ENCODE measurements at regions of chr5 and their contacts with region 1.

Region 1: DNA sequence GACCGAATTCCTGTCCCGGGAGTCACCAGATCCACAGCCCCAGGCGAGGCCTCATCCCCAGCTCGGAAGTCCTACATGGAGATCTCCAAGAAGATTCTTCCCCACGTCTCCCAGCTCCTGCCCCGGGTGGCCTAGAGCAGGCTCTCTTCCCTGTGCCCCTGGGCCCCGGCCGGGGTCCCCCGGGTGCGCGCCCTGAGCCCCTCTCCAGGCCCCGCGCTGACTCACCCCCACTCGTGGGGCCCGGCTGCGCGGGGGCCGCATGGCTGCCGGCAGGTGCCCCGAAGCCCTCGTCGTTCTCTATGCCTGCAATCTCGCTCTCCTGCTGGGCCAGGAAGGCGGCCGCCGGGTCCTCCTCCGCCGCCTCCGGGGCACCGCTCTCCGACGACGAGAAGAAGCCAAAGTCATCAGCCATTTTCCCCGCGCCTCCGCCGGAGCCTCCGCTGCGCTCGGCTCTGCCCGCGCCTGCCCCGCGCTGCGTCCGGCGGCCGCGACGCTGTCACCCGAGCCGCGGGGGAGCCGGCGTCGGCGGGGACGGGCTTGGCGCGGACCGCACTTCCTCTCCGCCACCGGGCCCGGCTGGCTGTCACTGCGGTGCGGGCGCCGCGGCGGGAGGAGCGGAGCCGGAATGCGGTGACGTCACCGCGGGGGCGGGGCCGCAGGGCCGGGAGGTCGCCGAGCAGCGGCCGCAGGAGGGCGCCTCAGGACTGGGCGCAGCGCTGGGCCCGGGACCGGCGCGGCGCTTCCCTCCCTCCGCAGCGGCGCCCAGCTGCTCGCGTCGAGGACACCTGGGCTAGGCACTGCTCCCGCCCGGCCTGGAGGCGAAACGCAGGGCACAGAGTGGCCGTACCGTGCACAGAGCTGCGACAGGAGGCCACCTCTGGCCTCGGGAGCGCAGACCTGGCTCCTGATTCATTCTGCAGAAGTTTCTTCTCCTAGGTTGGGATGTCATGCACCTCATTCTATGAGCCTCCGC is at the start of gene CLTB:
- DNase-seq: peak; percentile 72 to 98 (median 85)
- ATAC-seq: peak; percentile 90 to 91
- H3K4me3 Mint-ChIP-seq: peak within 1 kb of the TSS; percentile 77 to 88 (median 82)
- H3K27ac Mint-ChIP-seq: peak within 1 kb of the TSS; percentile 72 to 92 (median 88)
- H3K4me1 Mint-ChIP-seq: peaks cover 20 to 52% (median 46%) of the 10 kb centered on the region in 4 donors
- H3K27me3 Mint-ChIP-seq: no peaks in the 10 kb centered on the region
- polyA plus RNA-seq, gene CLTB: 69.2 to 82.7 (median 73.5) TPM

Region 2: GRCh38 chr5:176388444-176389134 is 27.6 kb before region 1 on chr5 and contains the starts of genes HIGD2A and NOP16:
- POLR2A ChIA-PET with region 1: interaction called, 25 read pairs
- DNase-seq: peak; percentile 96 to 100 (median 98)
- ATAC-seq: peak; percentile 89 to 90
- H3K4me3 Mint-ChIP-seq: peak within 1 kb of the TSS; percentile 86 to 100 (median 99)
- H3K27ac Mint-ChIP-seq: peak within 1 kb of the TSS; percentile 95 to 100 (median 100)
- H3K4me1 Mint-ChIP-seq: peaks cover 17 to 42% (median 37%) of the 10 kb centered on the region in 4 donors
- H3K27me3 Mint-ChIP-seq: no peaks in the 10 kb centered on the region
- polyA plus RNA-seq, gene HIGD2A: 209 to 280 (median 250) TPM
- polyA plus RNA-seq, gene NOP16: 19.1 to 40.5 (median 22.8) TPM

Region 3: GRCh38 chr5:176447982-176448608 is 31.9 kb after region 1 on chr5 and contains the start of gene FAF2:
- POLR2A ChIA-PET with region 1: interaction called, 22 read pairs
- DNase-seq: peak; percentile 95 to 100 (median 98)
- ATAC-seq: peak; percentile 96 to 97
- H3K4me3 Mint-ChIP-seq: peak within 1 kb of the TSS; percentile 90 to 100 (median 97)
- H3K27ac Mint-ChIP-seq: peak within 1 kb of the TSS; percentile 96 to 99 (median 98)
- H3K4me1 Mint-ChIP-seq: peaks cover 17 to 52% (median 44%) of the 10 kb centered on the region in 4 donors
- H3K27me3 Mint-ChIP-seq: peaks cover 0 to 3% (median 0%) of the 10 kb centered on the region in 5 donors
- polyA plus RNA-seq, gene FAF2: 9.5 to 12.0 (median 11.4) TPM

Region 4: GRCh38 chr5:176557846-176558245 is 141.6 kb after region 1 on chr5:
- POLR2A ChIA-PET with region 1: interaction called, 10 read pairs
- DNase-seq: no peak
- ATAC-seq: no peak
- H3K4me3 Mint-ChIP-seq: no peak overlapping the region
- H3K27ac Mint-ChIP-seq: no peak overlapping the region
- H3K4me1 Mint-ChIP-seq: peaks cover 37 to 82% (median 66%) of the 10 kb centered on the region in 4 donors
- H3K27me3 Mint-ChIP-seq: no peaks in the 10 kb centered on the region

Measured in naive thymus-derived CD8-positive, alpha-beta T cell (primary cell).